HEK293 (cell line): ENCODE measurements at regions of chr15 and their contacts with region 1.

Region 1: GRCh38 chr15:94119923-94120775 is 111.2 kb upstream of the MCTP2 start:
- H3K4me3 ChIP-seq: no peak overlapping the region
- H3K27ac ChIP-seq: no peak overlapping the region
- H3K4me1 ChIP-seq: peaks cover 9% of the 10 kb centered on the region
- CTCF ChIP-seq: peak; percentile 91

Region 2: GRCh38 chr15:93081399-93081798 is 1038.8 kb before region 1 on chr15:
- CTCF ChIA-PET with region 1: interaction called, 10 read pairs
- POLR2A ChIA-PET with region 1: no interaction called
- H3K4me3 ChIP-seq: no peak overlapping the region
- H3K27ac ChIP-seq: no peak overlapping the region
- H3K4me1 ChIP-seq: no peaks in the 10 kb centered on the region
- CTCF ChIP-seq: no peak

Region 3: DNA sequence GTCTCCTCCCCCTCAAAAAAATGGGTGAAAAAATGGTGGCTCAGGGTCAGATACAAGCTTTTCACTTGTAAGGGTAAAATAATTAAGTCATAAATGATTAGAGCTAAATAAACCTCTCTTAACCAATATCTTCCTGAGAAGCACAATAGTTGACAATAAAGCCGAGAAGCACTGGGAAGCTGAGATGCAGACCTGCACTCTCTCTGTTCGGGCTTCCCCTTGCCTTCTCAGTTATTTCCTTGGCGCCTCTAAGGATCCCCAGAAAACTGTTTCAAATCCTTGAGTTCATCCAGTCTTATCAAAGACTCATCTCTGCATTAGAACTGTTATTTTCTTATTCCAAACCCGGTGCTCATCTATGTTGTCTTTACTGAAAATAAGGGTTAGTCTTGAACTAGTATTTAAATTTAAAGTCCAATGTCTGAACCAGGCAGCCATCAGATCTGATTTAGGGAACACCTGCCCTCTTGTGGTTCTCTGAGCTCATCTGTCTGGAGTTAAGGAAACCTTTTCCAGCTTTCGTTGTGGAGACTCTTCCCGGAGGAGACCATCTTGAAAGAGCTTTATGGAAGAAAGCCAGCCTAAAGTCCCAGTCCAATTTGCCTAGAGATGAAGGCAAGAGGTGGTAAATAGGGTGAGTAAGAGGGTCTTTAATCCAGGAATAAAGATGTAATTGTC is 145.2 kb before region 1 on chr15:
- CTCF ChIA-PET with region 1: interaction called, 54 read pairs
- POLR2A ChIA-PET with region 1: no interaction called
- H3K4me3 ChIP-seq: no peak overlapping the region
- H3K27ac ChIP-seq: no peak overlapping the region
- H3K4me1 ChIP-seq: no peaks in the 10 kb centered on the region
- CTCF ChIP-seq: no peak

Region 4: GRCh38 chr15:93997084-93997918 is 122.8 kb before region 1 on chr15:
- CTCF ChIA-PET with region 1: interaction called, 62 read pairs
- POLR2A ChIA-PET with region 1: no interaction called
- H3K4me3 ChIP-seq: no peak overlapping the region
- H3K27ac ChIP-seq: no peak overlapping the region
- H3K4me1 ChIP-seq: no peaks in the 10 kb centered on the region
- CTCF ChIP-seq: no peak

Region 5: DNA sequence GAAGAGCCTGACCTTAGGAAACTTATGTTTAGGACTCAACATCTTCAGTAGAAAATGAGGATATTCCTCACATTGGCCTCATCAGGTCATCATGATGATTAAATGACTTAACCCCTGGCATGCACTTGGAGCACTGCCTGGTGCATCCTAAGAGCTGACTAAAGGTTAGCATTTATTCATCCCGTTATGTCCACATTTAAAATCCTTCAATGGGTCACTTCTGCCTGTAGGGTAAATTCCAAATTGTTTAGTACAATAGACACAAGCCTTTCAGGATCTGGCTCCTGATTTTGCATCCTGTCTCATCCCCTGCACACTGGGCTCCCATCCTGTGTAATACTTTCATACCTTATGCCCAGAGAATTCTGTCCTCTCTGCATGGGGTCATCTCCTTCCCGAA is 84.0 kb before region 1 on chr15:
- CTCF ChIA-PET with region 1: interaction called, 14 read pairs
- POLR2A ChIA-PET with region 1: no interaction called
- H3K4me3 ChIP-seq: no peak overlapping the region
- H3K27ac ChIP-seq: no peak overlapping the region
- H3K4me1 ChIP-seq: no peaks in the 10 kb centered on the region
- CTCF ChIP-seq: no peak

Region 6: DNA sequence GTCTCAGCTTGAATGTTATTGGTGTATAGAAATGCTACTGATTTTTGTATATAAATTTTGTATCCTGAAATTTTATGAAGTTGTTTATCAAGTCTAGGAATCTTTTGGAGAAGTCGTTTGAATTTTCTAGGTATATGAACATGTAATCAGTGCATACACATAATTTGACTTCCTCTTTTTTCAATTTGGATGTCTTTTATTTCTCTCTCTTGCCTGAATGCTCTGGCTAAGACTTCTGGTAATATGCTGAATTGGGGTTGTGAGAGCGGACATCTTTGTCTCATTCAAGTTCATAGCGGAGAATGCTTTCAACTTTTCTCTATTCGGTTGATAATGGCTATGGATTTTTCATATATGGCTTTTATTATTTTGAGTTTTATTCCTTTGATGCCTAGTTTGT is 10.4 kb after region 1 on chr15:
- CTCF ChIA-PET with region 1: interaction called, 18 read pairs
- POLR2A ChIA-PET with region 1: no interaction called
- H3K4me3 ChIP-seq: no peak overlapping the region
- H3K27ac ChIP-seq: no peak overlapping the region
- H3K4me1 ChIP-seq: no peaks in the 10 kb centered on the region
- CTCF ChIP-seq: no peak